ENCODE measurements at regions of chr3 and their contacts with region 1.

Region 1: DNA sequence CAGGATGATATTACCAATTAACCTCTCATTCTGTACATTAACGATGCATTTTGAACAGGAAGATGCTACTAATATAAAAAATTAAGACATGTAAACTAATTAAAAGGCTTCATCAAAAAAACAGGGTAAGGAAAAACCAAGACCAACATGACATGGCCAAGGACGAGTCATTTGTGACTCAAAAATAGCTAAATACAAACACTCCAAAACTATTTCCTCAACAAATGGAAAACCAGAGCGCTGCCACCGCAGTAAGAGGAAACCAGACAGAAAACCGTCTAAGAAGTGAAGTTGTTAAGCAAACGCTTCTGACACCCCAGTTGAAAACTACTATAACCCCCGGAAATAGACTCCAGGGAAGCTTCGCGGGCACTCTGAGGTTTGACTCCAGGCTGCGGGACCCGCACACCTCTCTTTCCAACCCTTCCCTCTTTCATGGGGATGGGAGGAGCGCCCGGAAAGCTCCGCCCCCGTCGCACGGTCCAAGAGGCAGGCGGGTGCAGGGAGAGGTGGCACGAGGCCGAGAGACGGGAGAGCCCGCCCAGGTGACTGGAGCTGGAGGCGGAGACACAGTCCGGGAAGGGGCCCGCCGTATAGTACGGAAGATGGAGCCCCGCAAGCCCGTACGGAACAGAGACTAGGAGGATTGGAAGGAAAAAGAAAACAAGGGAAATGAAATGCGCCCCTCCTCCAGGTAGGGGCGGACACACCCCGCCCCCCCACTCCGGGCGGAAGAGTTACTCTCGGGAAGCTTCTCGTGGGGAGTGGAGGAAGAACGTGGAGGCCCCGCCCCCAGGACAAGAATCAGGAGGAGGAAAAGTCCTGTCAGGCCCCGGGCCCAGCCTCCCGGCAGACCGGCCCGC is 708 bp downstream of the DCAF1 start:
- DNase-seq: peak; percentile 84
- H3K4me3 ChIP-seq: peak overlapping the region; percentile 64 to 97 (median 86)
- H3K27ac ChIP-seq: peak overlapping the region; percentile 95 to 100 (median 98)
- H3K4me1 ChIP-seq: peaks cover 0 to 22% (median 9%) of the 10 kb centered on the region in 3 donors
- H3K27me3 ChIP-seq: no peaks in the 10 kb centered on the region
- CTCF ChIP-seq: peak in 1 of 6 experiments; percentile 5
- POLR2A ChIP-seq: peak in 2 of 4 donors; percentile 41 to 62

Region 2: GRCh38 chr3:51669241-51670052 is 170.3 kb after region 1 on chr3:
- intact Hi-C with region 1: loop called (anchors 2 kb)
- DNase-seq: no peak
- H3K4me3 ChIP-seq: no peak overlapping the region
- H3K27ac ChIP-seq: peak overlapping the region; percentile 90 to 98 (median 94)
- H3K4me1 ChIP-seq: peaks cover 35 to 53% (median 35%) of the 10 kb centered on the region in 3 donors
- H3K27me3 ChIP-seq: no peaks in the 10 kb centered on the region
- CTCF ChIP-seq: peak; percentile 94 to 98 (median 96)
- POLR2A ChIP-seq: no peak

Measured in esophagus squamous epithelium (tissue), 5 donors.